Aorta (tissue), 5 donors: ENCODE measurements at regions of chr15 and their contacts with region 1.

Region 1: GRCh38 chr15:64792282-64792681 is 16.9 kb upstream of the RBPMS2 start:
- DNase-seq: no peak
- ATAC-seq: no peak
- H3K4me3 ChIP-seq: no peak overlapping the region
- H3K27ac ChIP-seq: no peak overlapping the region
- H3K4me1 ChIP-seq: no peaks in the 10 kb centered on the region
- H3K27me3 ChIP-seq: no peaks in the 10 kb centered on the region

Region 2: GRCh38 chr15:64749999-64750657 is 42.2 kb before region 1 on chr15:
- intact Hi-C with region 1: loop called in 1 of 2 experiments (anchors 5 kb)
- DNase-seq: no peak
- ATAC-seq: no peak
- H3K4me3 ChIP-seq: no peak overlapping the region
- H3K27ac ChIP-seq: no peak overlapping the region
- H3K4me1 ChIP-seq: no peaks in the 10 kb centered on the region
- H3K27me3 ChIP-seq: no peaks in the 10 kb centered on the region